Activated B cell treated with CpG ODN at 0.5 μM for 24 hours (primary cell): ENCODE measurements at regions of chr19 and their contacts with region 1.

Region 1: DNA sequence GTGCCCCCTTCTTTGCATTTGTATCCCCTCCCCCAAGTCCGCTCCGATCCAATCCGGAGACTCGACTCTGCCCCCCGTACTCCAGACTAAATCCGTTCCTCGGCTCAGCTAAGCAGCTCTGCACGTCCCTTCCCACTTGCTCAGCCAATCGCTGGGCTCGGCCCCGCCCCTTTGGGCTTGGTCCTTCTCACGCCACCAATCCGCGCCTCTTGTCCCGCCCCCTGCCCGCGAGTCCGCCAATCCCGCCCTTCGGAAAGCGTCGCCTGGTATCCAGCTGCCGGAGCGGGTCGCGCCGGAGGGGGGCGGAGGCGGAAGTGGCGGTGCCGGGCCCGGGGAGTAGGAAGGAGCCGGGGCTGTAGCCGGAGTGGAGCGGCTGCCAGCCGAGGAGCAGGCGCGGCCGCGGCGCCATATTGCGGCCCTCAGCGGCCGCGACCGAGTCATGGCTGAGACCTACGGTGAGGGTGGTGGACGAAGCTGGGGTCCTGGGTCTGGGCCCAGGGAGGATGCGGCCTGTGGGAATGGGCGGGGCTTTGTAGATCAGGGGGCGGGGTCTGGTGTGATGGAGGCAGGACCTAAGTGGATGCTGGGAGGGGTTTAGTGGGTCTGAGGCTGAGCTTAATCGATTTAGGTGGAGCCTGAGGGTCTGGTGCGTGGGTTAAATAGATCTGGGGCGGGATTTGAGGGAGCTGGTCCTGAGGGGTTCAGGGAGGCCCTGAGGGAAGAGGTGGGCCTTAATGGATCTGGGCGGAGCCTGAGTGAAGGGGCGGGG is at the start of gene RAB4B:
- DNase-seq: peak; percentile 100
- ATAC-seq: peak; percentile 74
- H3K4me3 Mint-ChIP-seq: peak within 1 kb of the TSS; percentile 98
- H3K27ac Mint-ChIP-seq: peak within 1 kb of the TSS; percentile 99
- H3K4me1 Mint-ChIP-seq: peaks cover 73% of the 10 kb centered on the region
- H3K27me3 Mint-ChIP-seq: no peaks in the 10 kb centered on the region
- CTCF ChIP-seq: no peak
- total RNA-seq, gene RAB4B: 90.6 and 98.1 TPM in 2 replicates

Region 2: DNA sequence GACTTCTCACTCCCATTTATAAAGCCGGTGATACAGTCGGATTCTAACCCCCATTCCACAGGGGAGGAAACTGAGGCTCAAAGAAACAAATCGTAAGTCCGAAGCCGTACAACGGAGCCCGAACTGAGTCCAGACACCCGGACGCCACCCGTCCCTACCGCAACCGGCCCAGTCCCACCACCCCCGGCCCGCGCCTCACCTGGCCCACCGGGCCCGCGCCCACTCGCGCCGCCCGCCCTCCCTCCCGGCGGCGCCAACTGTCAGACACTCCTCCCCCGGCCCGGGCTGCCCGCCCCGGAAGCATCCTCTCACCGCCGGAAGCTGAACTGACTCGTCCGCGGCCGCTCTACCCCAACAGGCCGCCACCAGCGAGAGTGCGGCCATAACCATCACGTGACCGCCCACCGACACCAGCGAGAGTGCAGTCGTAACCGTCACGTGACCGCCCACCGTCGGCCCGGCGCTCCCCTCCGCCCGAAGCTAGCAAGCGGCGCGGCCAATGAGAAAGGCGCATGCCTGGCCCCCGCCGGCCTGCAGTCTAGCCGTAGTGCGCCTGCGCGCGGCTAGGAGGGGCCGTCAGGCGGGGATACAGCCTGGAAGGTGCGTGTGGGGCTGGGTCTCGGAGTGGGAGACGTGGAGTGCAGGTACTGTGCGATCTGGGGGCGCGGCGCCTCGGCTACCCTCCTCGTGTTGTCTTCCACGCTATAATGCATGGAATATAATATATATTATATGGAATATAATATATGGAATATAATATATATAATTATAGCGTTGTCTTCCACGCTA is 429.8 kb before region 1 on chr19 and contains the starts of genes C19orf47 and PLD3:
- CTCF ChIA-PET with region 1: no interaction called
- POLR2A ChIA-PET with region 1: interaction called, 11 read pairs
- intact Hi-C with region 1: no loop called
- DNase-seq: peak; percentile 94
- ATAC-seq: peak; percentile 94
- H3K4me3 Mint-ChIP-seq: peak within 1 kb of the TSS; percentile 90
- H3K27ac Mint-ChIP-seq: peak within 1 kb of the TSS; percentile 85
- H3K4me1 Mint-ChIP-seq: peaks cover 28% of the 10 kb centered on the region
- H3K27me3 Mint-ChIP-seq: no peaks in the 10 kb centered on the region
- CTCF ChIP-seq: no peak
- total RNA-seq, gene C19orf47: 14.6 and 14.7 TPM in 2 replicates
- total RNA-seq, gene PLD3: 37.0 and 37.8 TPM in 2 replicates

Region 3: GRCh38 chr19:40603389-40604135 is 174.6 kb before region 1 on chr19:
- CTCF ChIA-PET with region 1: no interaction called
- POLR2A ChIA-PET with region 1: interaction called, 10 read pairs
- intact Hi-C with region 1: loop called (anchors 2 kb)
- DNase-seq: peak; percentile 90
- ATAC-seq: peak; percentile 72
- H3K4me3 Mint-ChIP-seq: peak overlapping the region; percentile 85
- H3K27ac Mint-ChIP-seq: peak overlapping the region; percentile 77
- H3K4me1 Mint-ChIP-seq: peaks cover 69% of the 10 kb centered on the region
- H3K27me3 Mint-ChIP-seq: peaks cover 22% of the 10 kb centered on the region
- CTCF ChIP-seq: no peak

Region 4: GRCh38 chr19:40690693-40691420 is 87.3 kb before region 1 on chr19:
- CTCF ChIA-PET with region 1: interaction called, 4 read pairs
- POLR2A ChIA-PET with region 1: interaction called, 32 read pairs
- intact Hi-C with region 1: loop called (anchors 1 kb)
- DNase-seq: peak; percentile 76
- ATAC-seq: peak; percentile 78
- H3K4me3 Mint-ChIP-seq: peak overlapping the region; percentile 95
- H3K27ac Mint-ChIP-seq: peak overlapping the region; percentile 89
- H3K4me1 Mint-ChIP-seq: peaks cover 16% of the 10 kb centered on the region
- H3K27me3 Mint-ChIP-seq: no peaks in the 10 kb centered on the region
- CTCF ChIP-seq: no peak

Region 5: GRCh38 chr19:40750059-40750873 is 27.9 kb before region 1 on chr19 and contains the start of gene ACTMAP:
- CTCF ChIA-PET with region 1: interaction called, 25 read pairs
- POLR2A ChIA-PET with region 1: interaction called, 351 read pairs
- intact Hi-C with region 1: loop called (anchors 1 kb)
- DNase-seq: peak; percentile 97
- ATAC-seq: peak; percentile 88
- H3K4me3 Mint-ChIP-seq: peak within 1 kb of the TSS; percentile 97
- H3K27ac Mint-ChIP-seq: peak within 1 kb of the TSS; percentile 96
- H3K4me1 Mint-ChIP-seq: peaks cover 49% of the 10 kb centered on the region
- H3K27me3 Mint-ChIP-seq: no peaks in the 10 kb centered on the region
- CTCF ChIP-seq: no peak
- total RNA-seq, gene ACTMAP: 8.5 and 12.7 TPM in 2 replicates

Region 6: GRCh38 chr19:40806488-40807468 is 28.7 kb after region 1 on chr19:
- CTCF ChIA-PET with region 1: interaction called, 23 read pairs
- POLR2A ChIA-PET with region 1: interaction called, 287 read pairs
- intact Hi-C with region 1: no loop called
- DNase-seq: peak; percentile 60
- ATAC-seq: peak; percentile 18
- H3K4me3 Mint-ChIP-seq: peak overlapping the region; percentile 69
- H3K27ac Mint-ChIP-seq: peak overlapping the region; percentile 87
- H3K4me1 Mint-ChIP-seq: peaks cover 84% of the 10 kb centered on the region
- H3K27me3 Mint-ChIP-seq: no peaks in the 10 kb centered on the region
- CTCF ChIP-seq: no peak

Region 7: DNA sequence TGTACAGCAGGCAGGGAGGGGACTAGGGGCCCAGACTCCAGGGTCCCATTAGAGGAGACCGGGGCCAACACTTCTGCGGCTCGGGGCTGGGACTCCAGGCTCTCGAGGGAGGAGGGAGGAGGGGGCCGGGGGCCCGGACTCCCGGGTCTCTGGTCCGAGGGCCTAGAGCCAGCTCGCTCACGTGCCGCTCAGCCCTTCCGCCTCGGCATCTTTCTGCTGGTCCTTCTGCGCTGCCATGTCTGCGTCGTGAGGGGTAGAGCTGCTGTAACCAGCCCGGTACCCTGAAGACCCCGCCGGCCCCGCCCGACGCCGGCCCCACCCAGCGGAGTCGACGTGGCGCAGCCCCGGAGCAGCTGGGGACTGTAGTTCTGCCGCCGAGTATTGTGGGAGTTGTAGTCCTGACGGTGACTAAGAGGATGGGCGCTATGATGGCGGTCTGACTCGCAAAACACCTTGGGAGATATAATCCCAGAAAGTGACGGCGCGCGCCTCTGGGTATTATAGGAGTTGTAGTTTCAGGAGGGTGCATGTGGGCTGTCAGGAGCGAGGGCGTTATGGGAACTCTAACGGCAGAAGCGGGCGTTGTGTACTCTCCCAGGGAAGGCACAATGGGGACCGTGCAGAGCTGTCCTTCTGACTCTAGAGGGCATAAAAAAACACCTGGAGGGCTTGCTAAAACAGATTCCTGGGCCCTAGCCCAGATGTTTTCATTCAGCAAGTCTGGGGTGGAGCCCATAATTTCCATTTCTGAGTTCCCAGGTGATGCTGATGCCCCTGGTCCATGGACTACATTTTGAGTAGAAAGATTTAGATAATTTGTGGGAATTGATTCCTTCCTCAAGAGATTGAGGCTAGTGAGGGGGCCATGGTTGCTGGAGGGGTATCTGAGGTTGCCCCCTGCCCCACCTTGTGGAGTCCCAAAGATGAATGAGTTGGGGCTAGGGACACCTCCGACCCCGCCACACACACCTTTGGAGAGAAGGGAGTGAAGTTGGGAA is 1181.2 kb after region 1 on chr19 and contains the start of gene RABAC1:
- CTCF ChIA-PET with region 1: no interaction called
- POLR2A ChIA-PET with region 1: no interaction called
- intact Hi-C with region 1: loop called (anchors 10 kb)
- DNase-seq: peak; percentile 79
- ATAC-seq: peak; percentile 91
- H3K4me3 Mint-ChIP-seq: peak within 1 kb of the TSS; percentile 90
- H3K27ac Mint-ChIP-seq: peak within 1 kb of the TSS; percentile 90
- H3K4me1 Mint-ChIP-seq: peaks cover 17% of the 10 kb centered on the region
- H3K27me3 Mint-ChIP-seq: no peaks in the 10 kb centered on the region
- CTCF ChIP-seq: no peak
- total RNA-seq, gene RABAC1: 96.7 and 102 TPM in 2 replicates